PC-9 (cell line): ENCODE measurements at regions of chr2 and their contacts with region 1.

Region 1: DNA sequence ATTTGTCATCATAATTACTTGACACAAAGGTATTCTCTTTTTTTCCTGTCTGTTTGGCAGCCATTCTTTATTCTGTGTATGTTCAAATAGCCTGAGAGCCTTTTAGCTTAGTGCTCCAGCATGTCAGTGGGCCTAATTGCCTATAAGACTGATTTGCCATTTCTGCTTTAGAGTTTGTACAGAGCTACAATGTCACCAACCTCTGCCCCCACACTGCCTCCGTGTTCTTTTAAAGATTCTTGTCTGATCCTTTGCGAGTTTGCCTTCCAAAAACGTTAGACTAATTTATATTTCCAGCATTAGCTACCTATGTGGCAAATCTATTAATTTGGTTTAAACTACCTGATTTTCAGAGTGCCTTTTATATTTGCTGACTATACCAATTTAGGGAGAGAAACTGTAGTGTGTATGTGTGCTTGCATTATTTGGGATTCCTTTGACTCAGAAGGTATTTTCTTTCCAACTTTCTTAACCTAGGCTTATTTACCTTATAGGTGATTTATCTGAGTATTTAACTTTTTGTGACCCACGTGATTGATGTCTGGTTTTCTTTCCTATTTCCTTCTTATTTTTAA is 70.8 kb downstream of the FAM117B start:
- DNase-seq: no peak
- H3K4me3 ChIP-seq: no peak overlapping the region
- H3K27ac ChIP-seq: no peak overlapping the region
- H3K4me1 ChIP-seq: no peaks in the 10 kb centered on the region
- H3K27me3 ChIP-seq: no peaks in the 10 kb centered on the region
- CTCF ChIP-seq: no peak

Region 2: GRCh38 chr2:201707753-201708152 is 997.8 kb before region 1 on chr2:
- CTCF ChIA-PET with region 1: no interaction called
- POLR2A ChIA-PET with region 1: no interaction called
- intact Hi-C with region 1: no loop called
- DNase-seq: no peak
- H3K4me3 ChIP-seq: no peak overlapping the region
- H3K27ac ChIP-seq: no peak overlapping the region
- H3K4me1 ChIP-seq: no peaks in the 10 kb centered on the region
- H3K27me3 ChIP-seq: no peaks in the 10 kb centered on the region
- CTCF ChIP-seq: no peak

Region 3: DNA sequence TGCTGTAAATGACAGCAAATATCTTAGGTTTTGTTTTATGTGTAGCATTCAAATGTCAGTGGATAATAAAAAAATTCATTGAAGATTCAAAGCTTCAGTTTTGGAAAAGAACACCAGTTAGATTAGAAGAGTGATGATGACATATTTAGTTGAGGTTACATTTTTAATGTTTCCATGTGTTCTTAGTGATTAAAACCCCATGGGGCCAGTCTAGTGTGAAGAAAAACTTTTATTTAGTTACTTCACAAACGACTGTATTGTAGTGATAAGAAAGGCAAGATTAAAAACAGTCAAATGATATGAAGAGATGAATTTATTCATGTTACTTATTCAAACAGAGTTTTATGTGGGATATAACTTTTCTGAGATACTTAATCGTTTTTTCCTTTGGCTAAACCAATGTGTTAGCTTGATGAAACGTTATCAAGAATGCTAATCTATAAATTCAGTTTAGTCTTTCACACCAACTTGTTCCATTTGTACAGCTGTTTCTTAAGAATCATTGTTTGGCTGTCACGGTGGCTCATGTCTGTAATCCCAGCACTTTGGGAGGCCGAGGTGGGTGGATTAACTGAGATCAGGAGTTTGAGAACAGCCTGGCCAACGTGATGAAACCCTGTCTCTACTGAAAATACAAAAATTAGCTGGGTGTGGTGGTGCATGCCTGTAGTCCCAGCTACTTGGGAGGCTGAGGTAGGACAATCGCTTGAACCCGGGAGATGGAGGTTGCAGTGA is 317.8 kb before region 1 on chr2:
- CTCF ChIA-PET with region 1: no interaction called
- POLR2A ChIA-PET with region 1: no interaction called
- intact Hi-C with region 1: no loop called
- DNase-seq: no peak
- H3K4me3 ChIP-seq: no peak overlapping the region
- H3K27ac ChIP-seq: no peak overlapping the region
- H3K4me1 ChIP-seq: no peaks in the 10 kb centered on the region
- H3K27me3 ChIP-seq: no peaks in the 10 kb centered on the region
- CTCF ChIP-seq: no peak

Region 4: DNA sequence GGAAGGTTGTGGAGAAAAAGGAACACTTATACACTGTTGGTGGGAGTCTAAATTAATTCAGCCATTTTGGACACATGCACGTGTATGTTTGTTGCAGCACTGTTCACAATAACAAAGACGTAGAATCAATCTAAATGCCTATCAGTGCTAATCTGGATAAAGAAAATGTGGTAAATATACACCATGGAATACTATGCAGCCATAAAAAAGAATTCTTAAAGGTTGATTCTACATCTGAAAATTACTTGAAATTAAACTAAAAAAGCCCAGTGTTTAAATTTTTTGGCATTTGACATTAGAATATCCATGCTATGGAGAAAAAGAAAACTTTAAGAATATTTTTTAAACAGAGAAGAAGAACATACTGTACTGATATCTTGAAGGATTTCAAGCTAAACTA is 245.4 kb before region 1 on chr2:
- CTCF ChIA-PET with region 1: no interaction called
- POLR2A ChIA-PET with region 1: interaction called, 29 read pairs
- intact Hi-C with region 1: no loop called
- DNase-seq: no peak
- H3K4me3 ChIP-seq: no peak overlapping the region
- H3K27ac ChIP-seq: no peak overlapping the region
- H3K4me1 ChIP-seq: no peaks in the 10 kb centered on the region
- H3K27me3 ChIP-seq: no peaks in the 10 kb centered on the region
- CTCF ChIP-seq: no peak